ENCODE measurements at regions of chr1 and their contacts with region 1.

Region 1: DNA sequence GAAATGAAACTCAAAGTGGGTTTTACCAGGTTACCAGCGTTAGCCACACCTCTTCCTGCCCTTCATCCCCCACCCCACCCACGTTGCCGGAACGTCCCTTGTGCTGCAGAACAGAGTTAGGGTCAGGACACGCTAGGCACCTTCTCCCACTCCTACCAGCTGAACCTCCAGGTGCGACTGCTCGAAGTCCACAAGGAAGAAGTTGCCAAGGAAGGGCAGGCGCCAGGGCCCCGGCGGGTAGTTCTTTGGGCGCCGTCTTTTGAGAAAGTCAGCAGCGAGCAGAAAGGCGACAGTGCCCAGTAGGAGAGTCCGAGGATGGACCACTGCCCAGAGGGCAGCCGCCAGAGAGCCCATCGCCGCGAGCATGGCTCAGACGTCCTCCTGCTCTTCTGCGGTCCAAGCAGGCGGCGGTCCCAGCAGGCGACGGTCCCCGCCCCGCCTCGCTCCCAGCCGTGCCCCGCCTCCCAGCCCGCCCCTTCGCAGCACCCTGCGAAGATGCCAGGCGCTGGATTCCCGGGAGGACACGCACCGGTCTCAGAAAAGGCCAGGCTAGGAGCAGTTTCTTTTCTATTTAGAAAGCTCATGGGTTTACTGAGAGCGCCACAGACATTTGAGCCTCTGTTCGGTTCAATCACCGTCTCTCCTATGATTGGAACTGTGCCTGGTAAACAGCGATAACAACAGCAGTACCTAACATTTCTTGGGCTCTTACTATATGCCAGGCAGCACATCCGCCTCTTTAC is at the start of gene CYP2J2:
- DNase-seq: peak; percentile 55 to 65
- H3K4me3 ChIP-seq: peak within 1 kb of the TSS; percentile 33 to 78 (median 67)
- H3K27ac ChIP-seq: peak within 1 kb of the TSS; percentile 52 to 70
- H3K4me1 ChIP-seq: no peaks in the 10 kb centered on the region
- H3K27me3 ChIP-seq: no peaks in the 10 kb centered on the region
- CTCF ChIP-seq: no peak
- POLR2A ChIP-seq: no peak
- total RNA-seq, gene CYP2J2: 0.16 to 12.8 (median 8.3) TPM

Region 2: DNA sequence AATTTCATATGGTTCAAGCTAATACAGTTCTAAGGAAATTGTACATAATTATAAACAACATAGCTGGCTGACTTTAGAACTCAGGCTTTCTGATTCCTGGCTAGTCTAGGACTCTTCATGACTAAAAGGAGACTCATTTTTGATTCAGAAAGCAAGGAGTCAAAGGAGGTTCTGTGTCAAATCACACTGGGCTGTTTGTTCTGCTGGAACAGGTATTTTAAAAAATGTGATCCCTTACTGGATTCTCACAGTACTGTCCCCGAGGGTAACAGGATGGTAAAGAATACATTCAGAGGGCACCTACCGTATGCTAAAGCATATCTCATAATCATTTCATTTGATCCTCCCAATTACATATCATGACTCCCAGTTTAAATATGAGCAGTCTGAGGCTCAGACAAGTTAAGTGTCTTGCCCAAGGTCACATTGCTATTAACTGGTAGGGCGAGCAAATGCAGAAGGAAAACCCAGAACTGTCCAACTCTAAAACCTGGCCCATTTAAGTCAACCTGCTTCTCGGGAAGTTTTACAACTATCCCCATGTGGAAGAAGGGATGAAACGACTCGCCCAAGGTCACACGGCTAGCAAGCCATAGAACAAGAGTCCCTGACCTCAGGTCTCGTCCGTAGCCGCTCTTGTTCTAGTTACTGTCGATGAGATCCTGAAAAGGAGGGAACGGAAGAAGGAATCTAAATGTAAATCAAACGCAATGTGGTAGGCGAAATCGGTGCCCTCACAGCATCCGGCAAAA is 1227.4 kb before region 1 on chr1:
- intact Hi-C with region 1: loop called (anchors 5 kb)
- DNase-seq: no peak
- H3K4me3 ChIP-seq: peak overlapping the region; percentile 92 to 97 (median 96)
- H3K27ac ChIP-seq: peak overlapping the region; percentile 96
- H3K4me1 ChIP-seq: peaks cover 0 to 10% of the 10 kb centered on the region in 2 donors
- H3K27me3 ChIP-seq: no peaks in the 10 kb centered on the region
- CTCF ChIP-seq: no peak
- POLR2A ChIP-seq: no peak

Region 3: GRCh38 chr1:59332983-59333382 is 593.6 kb before region 1 on chr1:
- intact Hi-C with region 1: no loop called
- DNase-seq: no peak
- H3K4me3 ChIP-seq: no peak overlapping the region
- H3K27ac ChIP-seq: no peak overlapping the region
- H3K4me1 ChIP-seq: no peaks in the 10 kb centered on the region
- H3K27me3 ChIP-seq: no peaks in the 10 kb centered on the region
- CTCF ChIP-seq: no peak
- POLR2A ChIP-seq: no peak